Natural killer cell (primary cell): ENCODE measurements at regions of chr1 and their contacts with region 1.

Region 1: GRCh38 chr1:22704440-22705067 is 6.1 kb upstream of the EPHB2 start:
- DNase-seq: peak; percentile 60 to 79
- ATAC-seq: peak; percentile 79 to 98 (median 94)
- H3K4me3 ChIP-seq: no peak overlapping the region
- H3K4me3 Mint-ChIP-seq: no peak overlapping the region
- H3K27ac ChIP-seq: no peak overlapping the region
- H3K27ac Mint-ChIP-seq: no peak overlapping the region
- H3K4me1 ChIP-seq: peaks cover 5% of the 10 kb centered on the region
- H3K4me1 Mint-ChIP-seq: no peaks in the 10 kb centered on the region
- H3K27me3 ChIP-seq: peaks cover 6% of the 10 kb centered on the region
- H3K27me3 Mint-ChIP-seq: peaks cover 24 to 26% of the 10 kb centered on the region in 2 donors
- CTCF ChIP-seq: peak; percentile 90

Region 2: DNA sequence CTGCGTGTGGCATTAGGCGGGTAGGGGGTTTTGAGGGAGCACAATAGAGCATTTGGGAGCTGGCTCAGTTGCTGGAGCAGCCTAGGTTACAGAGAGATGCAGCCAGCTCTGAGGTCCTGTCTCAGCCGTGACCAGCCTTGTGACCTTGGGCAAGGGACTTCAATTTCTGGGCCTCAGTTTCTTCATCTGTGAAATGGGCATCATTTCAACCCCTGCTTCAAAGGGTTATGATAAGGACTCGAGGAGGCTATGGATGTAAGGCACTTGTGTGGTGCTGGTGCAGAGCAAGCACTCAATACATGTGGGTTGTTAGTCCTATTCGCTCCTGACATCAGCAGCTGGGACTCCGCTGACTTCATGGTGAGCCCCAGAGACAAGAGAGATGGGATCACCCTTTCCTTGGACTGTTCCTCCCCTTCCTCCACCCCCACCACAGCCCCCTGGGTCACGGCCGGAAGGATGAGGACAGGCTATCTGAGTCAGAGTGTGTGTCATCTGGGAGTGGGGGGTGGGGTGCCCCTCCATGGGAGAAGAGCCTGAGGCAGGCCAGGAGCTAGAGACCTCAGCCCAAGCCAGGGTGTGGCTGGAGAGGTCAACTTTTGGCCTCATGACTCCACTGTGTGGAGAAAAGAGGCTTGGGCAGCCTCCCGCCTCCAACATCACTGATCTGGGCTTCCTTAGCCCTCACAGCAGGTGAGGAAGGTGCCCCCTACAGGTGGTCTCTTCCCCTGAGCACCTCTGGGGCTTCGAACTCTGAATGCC is 324.3 kb before region 1 on chr1:
- intact Hi-C with region 1: no loop called
- DNase-seq: no peak
- ATAC-seq: no peak
- H3K4me3 ChIP-seq: no peak overlapping the region
- H3K4me3 Mint-ChIP-seq: no peak overlapping the region
- H3K27ac ChIP-seq: no peak overlapping the region
- H3K27ac Mint-ChIP-seq: no peak overlapping the region
- H3K4me1 ChIP-seq: no peaks in the 10 kb centered on the region
- H3K4me1 Mint-ChIP-seq: no peaks in the 10 kb centered on the region
- H3K27me3 ChIP-seq: no peaks in the 10 kb centered on the region
- H3K27me3 Mint-ChIP-seq: peaks cover 5 to 16% of the 10 kb centered on the region in 2 donors
- CTCF ChIP-seq: no peak

Region 3: DNA sequence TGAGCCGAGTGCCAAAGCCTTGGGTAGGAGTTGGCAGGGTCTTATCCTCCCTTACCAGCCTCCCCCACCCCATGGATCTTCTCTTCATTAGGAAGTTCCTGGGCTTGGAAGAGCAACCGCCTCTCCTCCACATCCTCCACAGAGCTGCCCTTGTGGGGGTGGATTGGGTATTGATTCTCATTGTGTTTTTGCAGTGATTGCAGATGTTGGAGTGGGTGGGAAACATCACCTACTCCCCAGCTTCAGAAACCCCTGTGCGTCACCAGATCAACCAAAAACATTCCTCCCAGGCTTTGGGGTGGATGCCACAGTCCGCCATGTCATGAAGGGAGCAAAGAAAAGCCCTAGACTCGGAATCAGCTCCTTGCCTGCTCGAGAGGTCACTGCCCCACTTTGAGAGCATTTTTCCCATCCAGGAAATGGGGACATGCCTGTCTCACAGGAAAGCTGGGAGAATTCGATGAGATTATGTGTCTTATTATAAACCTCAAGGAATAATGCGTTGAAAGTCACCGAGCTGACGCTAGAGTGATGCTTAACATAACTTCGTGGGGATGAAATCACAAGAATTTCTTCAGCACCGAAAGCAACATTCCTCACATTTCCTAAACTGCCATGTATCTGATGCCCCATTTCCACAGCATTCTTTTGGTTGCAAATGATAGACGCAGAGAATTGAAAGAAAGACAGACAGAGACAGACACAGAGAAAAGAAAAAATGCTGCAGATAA is 297.6 kb before region 1 on chr1:
- intact Hi-C with region 1: no loop called
- DNase-seq: no peak
- ATAC-seq: no peak
- H3K4me3 ChIP-seq: no peak overlapping the region
- H3K4me3 Mint-ChIP-seq: no peak overlapping the region
- H3K27ac ChIP-seq: no peak overlapping the region
- H3K27ac Mint-ChIP-seq: no peak overlapping the region
- H3K4me1 ChIP-seq: no peaks in the 10 kb centered on the region
- H3K4me1 Mint-ChIP-seq: no peaks in the 10 kb centered on the region
- H3K27me3 ChIP-seq: no peaks in the 10 kb centered on the region
- H3K27me3 Mint-ChIP-seq: peaks cover 27 to 38% of the 10 kb centered on the region in 2 donors
- CTCF ChIP-seq: no peak

Region 4: GRCh38 chr1:22557341-22557950 is 147.1 kb before region 1 on chr1:
- intact Hi-C with region 1: no loop called
- DNase-seq: no peak
- ATAC-seq: no peak
- H3K4me3 ChIP-seq: no peak overlapping the region
- H3K4me3 Mint-ChIP-seq: no peak overlapping the region
- H3K27ac ChIP-seq: no peak overlapping the region
- H3K27ac Mint-ChIP-seq: no peak overlapping the region
- H3K4me1 ChIP-seq: no peaks in the 10 kb centered on the region
- H3K4me1 Mint-ChIP-seq: peaks cover 0 to 8% of the 10 kb centered on the region in 2 donors
- H3K27me3 ChIP-seq: peaks cover 5% of the 10 kb centered on the region
- H3K27me3 Mint-ChIP-seq: peaks cover 37 to 46% of the 10 kb centered on the region in 2 donors
- CTCF ChIP-seq: no peak

Region 5: GRCh38 chr1:22889213-22889827 is 184.8 kb after region 1 on chr1:
- intact Hi-C with region 1: loop called (anchors 1 kb)
- DNase-seq: peak in 1 of 2 donors; percentile 31
- ATAC-seq: peak in 2 of 3 donors; percentile 41 to 66
- H3K4me3 ChIP-seq: no peak overlapping the region
- H3K4me3 Mint-ChIP-seq: no peak overlapping the region
- H3K27ac ChIP-seq: no peak overlapping the region
- H3K27ac Mint-ChIP-seq: peak overlapping the region in 1 of 2 donors; percentile 1
- H3K4me1 ChIP-seq: peaks cover 15% of the 10 kb centered on the region
- H3K4me1 Mint-ChIP-seq: peaks cover 23 to 32% of the 10 kb centered on the region in 2 donors
- H3K27me3 ChIP-seq: no peaks in the 10 kb centered on the region
- H3K27me3 Mint-ChIP-seq: peaks cover 0 to 6% of the 10 kb centered on the region in 2 donors
- CTCF ChIP-seq: peak; percentile 86

Region 6: GRCh38 chr1:22930235-22930912 is 225.8 kb after region 1 on chr1:
- intact Hi-C with region 1: loop called (anchors 1 kb)
- DNase-seq: peak; percentile 30 to 33
- ATAC-seq: peak in 1 of 3 donors; percentile 73
- H3K4me3 ChIP-seq: no peak overlapping the region
- H3K4me3 Mint-ChIP-seq: no peak overlapping the region
- H3K27ac ChIP-seq: no peak overlapping the region
- H3K27ac Mint-ChIP-seq: no peak overlapping the region
- H3K4me1 ChIP-seq: no peaks in the 10 kb centered on the region
- H3K4me1 Mint-ChIP-seq: no peaks in the 10 kb centered on the region
- H3K27me3 ChIP-seq: no peaks in the 10 kb centered on the region
- H3K27me3 Mint-ChIP-seq: peaks cover 16 to 23% of the 10 kb centered on the region in 2 donors
- CTCF ChIP-seq: peak; percentile 56

Region 7: DNA sequence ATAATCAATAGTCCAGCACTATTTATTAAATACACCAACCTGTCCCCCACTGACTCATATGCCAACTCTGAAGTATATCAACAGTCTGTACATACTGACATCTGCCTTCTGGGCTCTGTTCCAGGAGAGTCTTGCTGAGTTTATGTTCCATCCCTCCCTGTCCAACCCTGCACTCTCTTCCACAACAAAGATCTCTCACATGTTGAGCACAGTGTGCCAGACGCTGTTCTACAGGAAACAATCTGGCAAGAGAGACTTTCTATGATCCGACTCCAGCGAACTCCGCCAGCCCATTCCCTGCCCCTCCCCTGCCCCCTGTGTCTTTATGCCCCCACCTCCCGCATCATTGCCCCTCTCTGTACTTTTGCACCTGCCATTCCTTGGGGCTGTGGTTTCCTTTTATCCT is 264.8 kb after region 1 on chr1:
- intact Hi-C with region 1: loop called (anchors 10 kb)
- DNase-seq: no peak
- ATAC-seq: no peak
- H3K4me3 ChIP-seq: no peak overlapping the region
- H3K4me3 Mint-ChIP-seq: no peak overlapping the region
- H3K27ac ChIP-seq: no peak overlapping the region
- H3K27ac Mint-ChIP-seq: no peak overlapping the region
- H3K4me1 ChIP-seq: no peaks in the 10 kb centered on the region
- H3K4me1 Mint-ChIP-seq: no peaks in the 10 kb centered on the region
- H3K27me3 ChIP-seq: peaks cover 5% of the 10 kb centered on the region
- H3K27me3 Mint-ChIP-seq: peaks cover 40 to 53% of the 10 kb centered on the region in 2 donors
- CTCF ChIP-seq: no peak

Region 8: DNA sequence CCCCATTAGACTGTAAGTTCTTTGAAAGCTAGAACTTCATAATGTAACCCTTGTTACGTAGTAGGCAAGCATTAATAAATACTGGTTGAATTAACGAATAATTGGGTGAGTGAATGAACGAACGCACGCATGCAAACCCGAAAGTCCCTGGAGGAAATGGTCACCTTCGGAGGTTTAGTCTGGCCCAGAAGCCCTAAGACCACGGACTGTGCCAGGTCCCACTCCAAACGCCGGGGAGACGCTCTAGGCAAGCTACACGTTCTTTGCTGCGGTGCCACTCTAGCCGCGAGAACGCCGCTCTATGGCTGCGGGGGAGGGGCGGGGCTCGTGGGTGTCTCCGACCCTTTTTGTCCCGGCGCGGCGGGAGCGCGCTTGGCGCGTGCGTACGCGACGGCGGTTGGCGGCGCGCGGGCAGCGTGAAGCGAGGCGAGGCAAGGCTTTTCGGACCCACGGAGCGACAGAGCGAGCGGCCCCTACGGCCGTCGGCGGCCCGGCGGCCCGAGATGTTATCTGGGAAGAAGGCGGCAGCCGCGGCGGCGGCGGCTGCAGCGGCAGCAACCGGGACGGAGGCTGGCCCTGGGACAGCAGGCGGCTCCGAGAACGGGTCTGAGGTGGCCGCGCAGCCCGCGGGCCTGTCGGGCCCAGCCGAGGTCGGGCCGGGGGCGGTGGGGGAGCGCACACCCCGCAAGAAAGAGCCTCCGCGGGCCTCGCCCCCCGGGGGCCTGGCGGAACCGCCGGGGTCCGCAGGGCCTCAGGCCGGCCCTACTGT is 314.7 kb after region 1 on chr1 and contains the start of gene KDM1A:
- intact Hi-C with region 1: no loop called
- DNase-seq: peak; percentile 93 to 95
- ATAC-seq: peak; percentile 94 to 99 (median 98)
- H3K4me3 ChIP-seq: peak within 1 kb of the TSS; percentile 90
- H3K4me3 Mint-ChIP-seq: peak within 1 kb of the TSS; percentile 96
- H3K27ac ChIP-seq: peak within 1 kb of the TSS; percentile 70
- H3K27ac Mint-ChIP-seq: peak within 1 kb of the TSS; percentile 87 to 94
- H3K4me1 ChIP-seq: peaks cover 11% of the 10 kb centered on the region
- H3K4me1 Mint-ChIP-seq: peaks cover 45 to 56% of the 10 kb centered on the region in 2 donors
- H3K27me3 ChIP-seq: no peaks in the 10 kb centered on the region
- H3K27me3 Mint-ChIP-seq: no peaks in the 10 kb centered on the region
- CTCF ChIP-seq: no peak
- total RNA-seq, gene KDM1A: 33.0 to 45.4 (median 43.8) TPM